Calu3 (cell line): ENCODE measurements at regions of chr12 and their contacts with region 1.

Region 1: GRCh38 chr12:88570103-88570502 is 10.2 kb downstream of the KITLG start:
- DNase-seq: no peak
- H3K4me3 Mint-ChIP-seq: no peak overlapping the region
- H3K27ac Mint-ChIP-seq: peak overlapping the region; percentile 39
- H3K4me1 Mint-ChIP-seq: peaks cover 87% of the 10 kb centered on the region
- H3K27me3 Mint-ChIP-seq: no peaks in the 10 kb centered on the region
- CTCF ChIP-seq: no peak

Region 2: GRCh38 chr12:87853448-87854003 is 716.6 kb before region 1 on chr12:
- CTCF ChIA-PET with region 1: no interaction called
- intact Hi-C with region 1: no loop called
- DNase-seq: no peak
- H3K4me3 Mint-ChIP-seq: no peak overlapping the region
- H3K27ac Mint-ChIP-seq: no peak overlapping the region
- H3K4me1 Mint-ChIP-seq: no peaks in the 10 kb centered on the region
- H3K27me3 Mint-ChIP-seq: no peaks in the 10 kb centered on the region
- CTCF ChIP-seq: no peak

Region 3: DNA sequence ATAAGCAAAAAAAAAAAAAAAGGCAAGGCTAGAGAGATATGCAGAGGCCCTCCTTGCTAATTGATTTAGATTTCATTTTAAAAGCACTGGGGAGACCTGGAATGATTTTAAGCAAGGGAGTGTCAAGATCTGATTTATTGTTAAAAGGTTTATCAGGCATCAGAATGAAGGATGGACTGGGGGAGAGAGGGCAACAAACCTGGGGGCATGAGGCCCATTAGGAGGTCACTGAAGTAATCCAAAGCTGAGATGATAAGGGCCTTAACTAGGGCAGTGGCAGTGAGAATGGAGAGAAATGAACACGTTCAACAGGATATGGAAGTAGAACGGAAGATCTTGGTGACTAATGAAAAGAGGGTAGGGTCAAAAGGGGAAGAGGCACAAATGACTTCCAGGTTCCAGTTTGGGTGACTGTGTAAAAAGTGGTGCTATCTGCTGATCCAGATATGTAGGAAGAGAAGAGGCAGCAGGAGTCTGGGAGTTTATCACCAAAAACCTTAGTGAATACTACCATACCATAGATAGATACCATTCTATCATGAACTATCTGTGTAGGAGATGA is 13.8 kb before region 1 on chr12:
- CTCF ChIA-PET with region 1: interaction called, 10 read pairs
- intact Hi-C with region 1: no loop called
- DNase-seq: no peak
- H3K4me3 Mint-ChIP-seq: no peak overlapping the region
- H3K27ac Mint-ChIP-seq: no peak overlapping the region
- H3K4me1 Mint-ChIP-seq: peaks cover 24% of the 10 kb centered on the region
- H3K27me3 Mint-ChIP-seq: no peaks in the 10 kb centered on the region
- CTCF ChIP-seq: no peak